Heart right ventricle (tissue), 16 donors: ENCODE measurements at regions of chr4 and their contacts with region 1.

Region 1: DNA sequence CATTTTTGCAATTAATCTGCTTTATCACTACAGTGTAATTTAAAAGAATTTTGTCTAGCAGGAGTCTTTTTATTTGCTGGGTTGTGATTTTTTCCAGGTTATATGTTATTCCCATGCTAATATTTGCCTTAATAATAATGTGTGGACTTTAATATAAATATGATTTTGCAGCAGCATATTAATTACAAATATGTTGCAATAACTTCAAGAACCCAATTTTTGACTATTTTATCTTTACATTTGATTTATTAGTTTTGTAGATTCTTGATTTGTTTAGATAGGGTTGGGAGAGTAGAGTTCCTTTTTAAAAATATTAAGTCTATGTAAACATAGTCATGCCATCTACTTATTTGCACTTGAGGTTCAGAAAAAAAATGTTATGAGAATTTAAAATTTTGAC is 676.2 kb downstream of the GRID2 start:
- DNase-seq: no peak
- ATAC-seq: no peak
- H3K4me3 ChIP-seq: no peak overlapping the region
- H3K27ac ChIP-seq: no peak overlapping the region
- H3K4me1 ChIP-seq: no peaks in the 10 kb centered on the region
- H3K27me3 ChIP-seq: no peaks in the 10 kb centered on the region
- CTCF ChIP-seq: no peak

Region 2: GRCh38 chr4:93414041-93414550 is 434.2 kb after region 1 on chr4:
- intact Hi-C with region 1: loop called in 1 of 10 experiments (anchors 5 kb)
- DNase-seq: no peak
- ATAC-seq: no peak
- H3K4me3 ChIP-seq: no peak overlapping the region
- H3K27ac ChIP-seq: no peak overlapping the region
- H3K4me1 ChIP-seq: no peaks in the 10 kb centered on the region
- H3K27me3 ChIP-seq: no peaks in the 10 kb centered on the region
- CTCF ChIP-seq: no peak